ENCODE measurements at regions of chr17 and their contacts with region 1.

Region 1: DNA sequence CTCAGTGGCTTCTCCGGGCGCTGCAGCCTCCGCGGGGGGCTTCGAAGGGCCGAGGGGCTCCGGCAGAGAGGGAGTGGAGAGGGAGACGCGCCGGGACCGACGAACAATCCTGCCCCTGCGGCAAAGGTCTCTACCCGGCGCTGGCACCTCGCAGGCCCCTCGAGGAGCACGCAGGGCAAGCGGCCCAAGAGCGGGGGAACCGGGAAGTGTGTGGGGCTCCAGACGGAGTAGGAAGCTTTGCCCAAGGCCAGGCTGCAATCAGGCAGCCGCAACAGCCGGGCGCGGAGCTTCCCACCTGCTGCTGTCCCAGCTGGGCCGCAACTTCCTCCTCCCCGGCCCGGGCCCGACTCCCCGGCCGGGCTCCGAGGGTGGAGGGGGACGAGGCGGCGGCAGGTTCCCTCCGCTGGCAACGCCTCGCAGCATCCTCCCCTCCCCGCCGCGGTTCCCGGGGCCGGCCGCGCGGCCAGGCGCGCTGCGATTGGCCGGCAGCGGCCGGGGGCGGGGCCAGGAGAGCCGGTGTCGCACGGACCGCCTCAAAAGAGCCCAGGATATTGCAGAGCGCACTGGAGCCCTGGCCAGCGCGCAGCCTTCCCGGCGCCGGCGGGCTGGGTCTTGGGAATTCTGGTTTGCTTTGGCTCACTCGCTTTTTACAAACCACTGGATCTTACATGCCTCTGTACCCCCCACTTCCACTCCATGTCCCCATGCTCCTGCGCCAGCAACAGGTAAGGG is at the start of gene KCNJ2:
- DNase-seq: peak; percentile 81 to 89
- H3K4me3 ChIP-seq: peak within 1 kb of the TSS; percentile 43
- H3K4me3 Mint-ChIP-seq: peak within 1 kb of the TSS; percentile 95
- H3K27ac Mint-ChIP-seq: peak within 1 kb of the TSS; percentile 50
- H3K4me1 ChIP-seq: no peaks in the 10 kb centered on the region; the same call in 1 of the 2 replicates
- H3K4me1 Mint-ChIP-seq: no peaks in the 10 kb centered on the region
- H3K27me3 ChIP-seq: peaks cover 6% of the 10 kb centered on the region; the same call in 1 of the 2 replicates
- H3K27me3 Mint-ChIP-seq: peaks cover 14% of the 10 kb centered on the region
- CTCF ChIP-seq: no peak
- total RNA-seq, gene KCNJ2: 0.70 and 1.0 TPM in 2 replicates

Region 2: DNA sequence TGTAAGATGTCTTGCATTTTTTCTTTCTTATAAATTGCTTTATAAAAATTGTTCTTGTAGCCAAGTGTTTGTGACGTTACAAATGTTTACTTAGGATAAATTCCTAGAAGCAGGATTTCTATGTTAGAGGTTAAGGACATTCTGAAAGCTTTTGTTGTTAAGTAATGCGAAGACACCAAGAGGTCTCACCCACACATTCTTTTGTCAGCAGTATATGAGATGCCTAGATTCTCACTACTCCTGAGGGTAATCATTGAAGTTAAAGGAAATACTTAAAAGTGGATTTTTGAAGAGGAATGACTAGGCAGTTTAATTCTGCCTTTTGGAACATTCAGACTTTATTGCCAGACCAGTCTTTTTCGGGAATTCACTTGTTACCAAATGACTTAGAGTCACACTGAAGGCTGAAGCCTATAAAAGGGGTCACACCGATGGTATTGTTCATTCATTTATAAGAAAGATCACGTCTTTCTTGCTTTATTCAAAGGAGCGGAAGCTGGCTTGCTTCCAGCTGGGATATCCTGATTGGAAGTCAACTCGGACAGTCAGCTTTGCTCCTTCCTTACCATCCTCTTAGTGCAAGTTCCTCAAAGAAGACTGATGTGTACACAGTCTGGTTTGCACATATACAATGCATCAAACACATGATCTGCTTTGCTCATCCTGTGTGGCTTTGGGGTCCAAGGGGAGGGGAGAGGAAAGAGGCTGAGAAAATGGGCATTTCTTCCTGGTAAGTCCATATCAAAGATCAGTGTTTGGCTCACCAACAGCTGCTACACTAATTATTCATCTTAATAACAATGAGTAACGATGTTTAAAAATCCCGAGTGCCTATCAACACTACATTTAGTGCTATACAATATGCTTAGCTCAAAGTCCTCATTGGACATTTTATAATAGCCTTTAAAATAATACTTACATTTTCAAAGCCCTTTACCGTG is 594.6 kb before region 1 on chr17:
- CTCF ChIA-PET with region 1: no interaction called
- POLR2A ChIA-PET with region 1: no interaction called
- intact Hi-C with region 1: loop called (anchors 2 kb)
- DNase-seq: no peak
- H3K4me3 ChIP-seq: no peak overlapping the region
- H3K4me3 Mint-ChIP-seq: no peak overlapping the region
- H3K27ac Mint-ChIP-seq: no peak overlapping the region
- H3K4me1 ChIP-seq: no peaks in the 10 kb centered on the region
- H3K4me1 Mint-ChIP-seq: no peaks in the 10 kb centered on the region
- H3K27me3 ChIP-seq: no peaks in the 10 kb centered on the region
- H3K27me3 Mint-ChIP-seq: peaks cover 8% of the 10 kb centered on the region
- CTCF ChIP-seq: no peak

Region 3: GRCh38 chr17:69607162-69607834 is 561.8 kb before region 1 on chr17:
- CTCF ChIA-PET with region 1: no interaction called
- POLR2A ChIA-PET with region 1: no interaction called
- intact Hi-C with region 1: loop called (anchors 5 kb)
- DNase-seq: peak; percentile 65 to 71
- H3K4me3 ChIP-seq: no peak overlapping the region
- H3K4me3 Mint-ChIP-seq: no peak overlapping the region
- H3K27ac Mint-ChIP-seq: no peak overlapping the region
- H3K4me1 ChIP-seq: peaks cover 14% of the 10 kb centered on the region
- H3K4me1 Mint-ChIP-seq: peaks cover 15% of the 10 kb centered on the region
- H3K27me3 ChIP-seq: no peaks in the 10 kb centered on the region
- H3K27me3 Mint-ChIP-seq: no peaks in the 10 kb centered on the region
- CTCF ChIP-seq: peak; percentile 71 to 75

Region 4: DNA sequence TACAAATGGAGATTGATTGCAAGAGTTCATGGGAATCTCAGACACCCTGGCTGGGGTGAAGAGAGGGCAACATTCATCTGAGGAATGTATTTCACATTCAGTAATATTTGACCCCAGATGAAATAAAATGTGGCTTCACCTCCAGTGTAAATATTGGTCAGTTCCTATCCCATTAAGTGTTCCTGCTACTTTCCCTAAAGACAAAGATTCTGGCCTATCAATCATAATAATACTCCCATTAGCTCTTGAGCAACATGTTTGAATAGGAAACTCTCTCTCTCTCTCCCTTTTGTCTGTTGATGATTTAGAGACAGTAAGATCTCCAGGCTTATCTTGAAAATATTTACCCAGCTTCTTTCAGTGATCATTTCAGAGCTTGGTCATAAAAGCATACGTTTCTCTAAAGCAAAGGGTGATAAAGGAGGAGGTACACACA is 70.3 kb after region 1 on chr17:
- CTCF ChIA-PET with region 1: no interaction called
- POLR2A ChIA-PET with region 1: no interaction called
- intact Hi-C with region 1: loop called (anchors 1 kb)
- DNase-seq: peak; percentile 72
- H3K4me3 ChIP-seq: no peak overlapping the region
- H3K4me3 Mint-ChIP-seq: no peak overlapping the region
- H3K27ac Mint-ChIP-seq: no peak overlapping the region
- H3K4me1 ChIP-seq: peaks cover 23% of the 10 kb centered on the region
- H3K4me1 Mint-ChIP-seq: peaks cover 22% of the 10 kb centered on the region
- H3K27me3 ChIP-seq: no peaks in the 10 kb centered on the region
- H3K27me3 Mint-ChIP-seq: no peaks in the 10 kb centered on the region
- CTCF ChIP-seq: no peak

Region 5: GRCh38 chr17:70405492-70406220 is 236.5 kb after region 1 on chr17:
- CTCF ChIA-PET with region 1: no interaction called
- POLR2A ChIA-PET with region 1: no interaction called
- intact Hi-C with region 1: no loop called
- DNase-seq: no peak
- H3K4me3 ChIP-seq: no peak overlapping the region
- H3K4me3 Mint-ChIP-seq: no peak overlapping the region
- H3K27ac Mint-ChIP-seq: no peak overlapping the region
- H3K4me1 ChIP-seq: peaks cover 13% of the 10 kb centered on the region
- H3K4me1 Mint-ChIP-seq: peaks cover 5% of the 10 kb centered on the region
- H3K27me3 ChIP-seq: no peaks in the 10 kb centered on the region
- H3K27me3 Mint-ChIP-seq: no peaks in the 10 kb centered on the region
- CTCF ChIP-seq: no peak

Region 6: GRCh38 chr17:70521821-70522256 is 352.7 kb after region 1 on chr17:
- CTCF ChIA-PET with region 1: no interaction called
- POLR2A ChIA-PET with region 1: no interaction called
- intact Hi-C with region 1: loop called (anchors 10 kb)
- DNase-seq: no peak
- H3K4me3 ChIP-seq: no peak overlapping the region
- H3K4me3 Mint-ChIP-seq: no peak overlapping the region
- H3K27ac Mint-ChIP-seq: no peak overlapping the region
- H3K4me1 ChIP-seq: peaks cover 17% of the 10 kb centered on the region
- H3K4me1 Mint-ChIP-seq: peaks cover 20% of the 10 kb centered on the region
- H3K27me3 ChIP-seq: no peaks in the 10 kb centered on the region
- H3K27me3 Mint-ChIP-seq: no peaks in the 10 kb centered on the region
- CTCF ChIP-seq: no peak

Region 7: DNA sequence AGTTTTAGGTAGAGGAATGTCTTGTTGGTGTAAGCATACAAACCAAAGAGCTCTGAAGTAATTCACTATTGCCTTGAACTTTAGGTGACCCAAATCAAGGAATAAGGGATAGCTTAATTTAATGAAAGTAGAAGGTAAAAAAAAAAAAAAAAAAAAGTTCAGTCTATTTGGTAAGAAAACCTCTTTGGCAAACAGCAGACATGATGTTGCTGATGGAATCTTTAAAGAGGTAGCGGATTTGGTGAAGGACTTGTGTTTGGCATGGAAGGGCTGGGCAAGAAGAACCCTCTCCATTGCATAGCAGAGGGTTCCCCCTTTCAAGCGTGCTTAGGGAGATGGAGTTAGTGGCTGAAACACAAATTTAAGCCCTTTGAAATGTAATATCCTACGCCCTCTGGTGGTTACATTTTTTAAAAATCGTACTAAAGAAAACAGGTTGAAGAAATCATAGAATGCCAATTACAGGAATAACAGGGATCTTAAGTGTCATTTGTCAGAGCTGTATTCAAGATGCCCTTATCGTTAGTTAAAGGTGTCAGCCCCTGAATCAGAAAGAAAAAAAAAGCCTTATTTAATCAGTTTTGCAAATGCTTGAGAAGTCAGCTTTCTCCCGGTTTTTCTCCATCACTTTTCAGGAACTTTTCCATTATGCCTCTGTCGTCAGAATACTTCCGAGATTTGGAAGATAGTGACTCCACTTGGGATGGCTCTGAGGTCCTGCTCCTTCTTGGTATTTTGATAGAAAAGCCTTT is 383.3 kb after region 1 on chr17:
- CTCF ChIA-PET with region 1: no interaction called
- POLR2A ChIA-PET with region 1: no interaction called
- intact Hi-C with region 1: loop called (anchors 5 kb)
- DNase-seq: peak in 1 of 2 experiments; percentile 45
- H3K4me3 ChIP-seq: no peak overlapping the region
- H3K4me3 Mint-ChIP-seq: no peak overlapping the region
- H3K27ac Mint-ChIP-seq: no peak overlapping the region
- H3K4me1 ChIP-seq: no peaks in the 10 kb centered on the region
- H3K4me1 Mint-ChIP-seq: peaks cover 6% of the 10 kb centered on the region
- H3K27me3 ChIP-seq: no peaks in the 10 kb centered on the region
- H3K27me3 Mint-ChIP-seq: no peaks in the 10 kb centered on the region
- CTCF ChIP-seq: peak; percentile 47 to 70

Region 8: GRCh38 chr17:70622368-70623260 is 453.5 kb after region 1 on chr17:
- CTCF ChIA-PET with region 1: no interaction called
- POLR2A ChIA-PET with region 1: no interaction called
- intact Hi-C with region 1: loop called (anchors 1 kb)
- DNase-seq: peak; percentile 50 to 56
- H3K4me3 ChIP-seq: no peak overlapping the region
- H3K4me3 Mint-ChIP-seq: no peak overlapping the region
- H3K27ac Mint-ChIP-seq: no peak overlapping the region
- H3K4me1 ChIP-seq: no peaks in the 10 kb centered on the region
- H3K4me1 Mint-ChIP-seq: no peaks in the 10 kb centered on the region
- H3K27me3 ChIP-seq: no peaks in the 10 kb centered on the region
- H3K27me3 Mint-ChIP-seq: peaks cover 16% of the 10 kb centered on the region
- CTCF ChIP-seq: peak; percentile 67 to 80